Pancreas (tissue), 10 donors: ENCODE measurements at regions of chr22 and their contacts with region 1.

Region 1: DNA sequence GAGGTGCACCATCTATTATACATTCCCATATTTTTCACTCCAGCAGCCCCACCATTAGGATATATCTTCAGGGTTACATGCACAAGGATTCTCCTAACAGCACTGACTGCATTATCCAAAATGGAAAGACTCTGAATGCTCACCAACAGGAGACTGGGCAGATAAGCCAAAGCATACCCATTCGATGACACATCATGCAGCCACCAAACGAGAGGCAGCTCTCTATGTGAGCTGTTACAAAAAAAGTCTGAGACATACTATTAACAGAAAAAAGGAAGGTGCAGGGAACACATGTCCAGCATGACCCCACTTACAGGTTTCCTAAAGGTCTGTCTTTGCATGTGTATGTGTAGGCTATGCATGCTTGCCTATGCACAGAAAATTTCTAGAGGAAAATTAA is 12.4 kb upstream of the SERPIND1 start:
- DNase-seq: no peak
- ATAC-seq: no peak
- H3K4me3 ChIP-seq: no peak overlapping the region
- H3K27ac ChIP-seq: no peak overlapping the region
- H3K4me1 ChIP-seq: no peaks in the 10 kb centered on the region
- H3K27me3 ChIP-seq: no peaks in the 10 kb centered on the region
- CTCF ChIP-seq: no peak

Region 2: DNA sequence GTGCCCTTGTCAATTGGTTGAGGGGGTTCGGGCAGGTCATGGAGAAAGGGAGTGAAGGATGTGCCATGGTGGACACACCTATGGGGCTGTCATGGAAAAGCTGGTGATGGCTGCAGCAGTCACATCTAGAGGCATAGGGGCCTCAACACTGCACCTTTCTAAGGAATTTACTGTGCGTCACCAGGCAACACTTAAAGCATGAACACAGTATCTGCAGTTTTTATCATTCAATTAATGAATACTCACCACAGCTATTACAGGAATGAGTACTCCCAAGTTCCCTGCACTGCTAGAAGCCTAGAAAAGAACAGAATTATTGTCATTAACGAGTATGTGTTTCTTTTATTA is 31.4 kb after region 1 on chr22:
- intact Hi-C with region 1: no loop called
- DNase-seq: no peak
- ATAC-seq: no peak
- H3K4me3 ChIP-seq: no peak overlapping the region
- H3K27ac ChIP-seq: no peak overlapping the region
- H3K4me1 ChIP-seq: no peaks in the 10 kb centered on the region
- H3K27me3 ChIP-seq: no peaks in the 10 kb centered on the region
- CTCF ChIP-seq: no peak

Region 3: GRCh38 chr22:20979243-20979809 is 217.8 kb after region 1 on chr22:
- intact Hi-C with region 1: loop called in 1 of 3 experiments (anchors 10 kb)
- DNase-seq: peak; percentile 57 to 79 (median 74)
- ATAC-seq: peak; percentile 27 to 67 (median 50)
- H3K4me3 ChIP-seq: peak overlapping the region in 2 of 4 donors; percentile 17 to 25
- H3K27ac ChIP-seq: no peak overlapping the region
- H3K4me1 ChIP-seq: peaks cover 3 to 21% (median 4%) of the 10 kb centered on the region in 3 donors
- H3K27me3 ChIP-seq: no peaks in the 10 kb centered on the region
- CTCF ChIP-seq: no peak